Colonic mucosa (tissue), 4 donors: ENCODE measurements at regions of chr9 and their contacts with region 1.

Region 1: GRCh38 chr9:89549031-89549644 is 51.2 kb upstream of the SEMA4D start:
- DNase-seq: peak; percentile 86
- H3K4me3 ChIP-seq: no peak overlapping the region
- H3K27ac ChIP-seq: no peak overlapping the region
- H3K4me1 ChIP-seq: no peaks in the 10 kb centered on the region
- H3K27me3 ChIP-seq: no peaks in the 10 kb centered on the region
- CTCF ChIP-seq: peak; percentile 94

Region 2: DNA sequence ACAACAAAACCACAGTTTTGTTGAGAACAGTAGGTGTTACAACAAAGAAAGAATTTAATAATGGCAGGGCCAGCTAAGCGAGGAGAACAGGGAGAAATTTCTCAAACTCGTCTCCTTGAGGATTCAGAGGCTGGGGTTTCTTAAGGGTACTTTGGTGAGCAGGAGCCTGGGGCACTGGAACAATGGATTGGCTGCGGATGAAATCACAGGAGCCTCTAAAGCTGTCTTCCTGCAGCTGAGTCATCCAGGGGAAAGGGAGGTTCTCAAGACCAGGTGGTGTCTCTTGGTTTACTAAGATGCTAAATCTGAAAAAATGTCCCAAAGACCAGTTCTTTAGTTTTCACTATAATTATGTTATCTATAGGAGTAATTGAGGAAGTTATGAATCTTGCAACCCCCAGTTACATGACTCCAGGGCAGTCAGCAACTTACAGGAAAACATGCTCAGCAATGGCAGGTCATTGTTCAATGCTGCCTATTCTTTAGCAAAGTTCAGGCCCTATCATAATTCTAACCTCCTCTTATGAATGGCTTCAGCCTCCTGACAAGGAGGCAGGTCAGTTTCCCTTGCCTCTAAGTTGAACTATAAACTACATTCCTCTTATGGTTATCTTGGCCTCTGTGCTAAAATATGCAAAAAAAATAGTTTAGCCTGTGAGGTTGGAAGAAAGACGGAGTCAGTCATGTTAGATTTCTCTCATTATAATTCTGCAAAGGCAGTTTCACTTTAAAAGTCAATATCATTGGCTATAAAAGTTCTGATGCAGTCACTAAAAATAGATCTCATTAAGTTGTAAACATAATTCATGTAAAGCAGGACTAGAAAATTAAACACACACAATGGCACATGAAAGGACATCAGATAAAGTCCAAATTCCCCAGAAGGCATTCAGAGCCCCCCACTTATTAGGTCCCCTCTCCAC is 301.4 kb before region 1 on chr9:
- intact Hi-C with region 1: no loop called
- DNase-seq: no peak
- H3K4me3 ChIP-seq: no peak overlapping the region
- H3K27ac ChIP-seq: peak overlapping the region; percentile 80
- H3K4me1 ChIP-seq: no peaks in the 10 kb centered on the region
- H3K27me3 ChIP-seq: no peaks in the 10 kb centered on the region
- CTCF ChIP-seq: no peak

Region 3: DNA sequence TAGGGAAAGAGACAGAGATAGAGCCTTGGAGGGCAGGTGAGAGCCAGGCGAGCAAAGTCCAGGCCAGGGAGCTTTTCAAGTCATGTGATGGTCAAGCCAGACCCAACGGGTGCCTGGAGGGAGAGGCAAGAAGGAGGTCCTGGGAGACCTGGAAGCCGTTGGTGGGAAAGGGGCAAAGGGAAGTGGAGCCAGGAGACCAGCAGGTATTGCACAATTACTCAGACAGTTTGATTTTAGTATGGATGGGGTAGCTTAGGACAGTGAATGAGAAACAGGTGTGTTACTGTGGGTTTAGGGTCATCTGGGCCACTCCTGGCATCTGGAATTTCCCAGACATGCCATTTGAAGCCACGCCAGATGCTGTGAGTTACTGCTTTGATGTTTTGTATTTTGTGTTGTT is 225.7 kb before region 1 on chr9:
- intact Hi-C with region 1: loop called (anchors 5 kb)
- DNase-seq: no peak
- H3K4me3 ChIP-seq: no peak overlapping the region
- H3K27ac ChIP-seq: no peak overlapping the region
- H3K4me1 ChIP-seq: peaks cover 10% of the 10 kb centered on the region
- H3K27me3 ChIP-seq: no peaks in the 10 kb centered on the region
- CTCF ChIP-seq: no peak

Region 4: DNA sequence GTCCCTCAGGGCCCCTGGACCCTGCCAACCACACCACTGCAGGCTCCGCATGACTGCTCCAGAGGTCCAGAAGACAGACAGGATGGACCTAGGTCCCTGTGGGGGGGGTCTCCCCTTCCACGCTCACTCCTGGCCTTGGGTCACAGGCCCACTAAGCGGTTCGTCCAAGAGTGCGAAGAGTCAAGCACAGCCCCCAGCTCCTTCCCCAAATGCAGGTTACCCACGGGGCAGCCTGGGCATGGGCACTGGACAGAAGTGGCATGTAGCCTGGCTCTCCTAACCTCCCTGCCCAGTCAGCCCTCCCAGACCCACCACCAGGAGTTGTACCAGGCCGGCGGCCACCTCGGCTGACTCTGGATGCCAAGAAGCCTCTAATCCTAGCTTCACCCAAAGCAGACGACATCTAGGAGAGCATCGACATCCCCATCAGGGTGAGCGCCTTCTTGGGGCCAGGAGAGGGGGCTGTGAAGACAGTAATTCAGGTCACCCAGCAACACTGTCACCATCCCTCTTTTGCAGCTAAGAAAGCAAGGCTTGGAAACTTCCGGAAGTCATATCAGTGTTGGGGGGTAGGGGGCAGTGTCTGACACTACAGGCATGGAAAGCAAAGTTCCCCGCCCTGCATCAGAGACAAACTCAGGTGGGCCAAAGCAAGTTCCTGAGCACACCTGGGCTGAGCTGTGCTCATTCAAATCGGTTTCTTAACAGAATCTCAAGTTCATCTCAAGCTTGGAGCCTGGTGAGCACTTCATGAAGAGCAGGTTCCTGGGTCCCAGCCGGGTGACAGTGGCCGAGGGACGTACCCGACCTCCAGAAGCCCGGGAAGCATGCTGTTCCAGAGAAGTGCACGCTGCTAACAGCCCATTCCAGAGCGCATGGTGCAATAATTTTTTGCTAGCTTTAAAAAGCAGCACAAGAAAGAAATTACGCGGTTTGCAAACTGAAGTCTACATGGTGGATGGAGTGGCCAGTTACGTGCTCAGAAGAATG is 119.9 kb before region 1 on chr9:
- intact Hi-C with region 1: loop called (anchors 5 kb)
- DNase-seq: no peak
- H3K4me3 ChIP-seq: no peak overlapping the region
- H3K27ac ChIP-seq: no peak overlapping the region
- H3K4me1 ChIP-seq: peaks cover 4% of the 10 kb centered on the region
- H3K27me3 ChIP-seq: no peaks in the 10 kb centered on the region
- CTCF ChIP-seq: no peak

Region 5: DNA sequence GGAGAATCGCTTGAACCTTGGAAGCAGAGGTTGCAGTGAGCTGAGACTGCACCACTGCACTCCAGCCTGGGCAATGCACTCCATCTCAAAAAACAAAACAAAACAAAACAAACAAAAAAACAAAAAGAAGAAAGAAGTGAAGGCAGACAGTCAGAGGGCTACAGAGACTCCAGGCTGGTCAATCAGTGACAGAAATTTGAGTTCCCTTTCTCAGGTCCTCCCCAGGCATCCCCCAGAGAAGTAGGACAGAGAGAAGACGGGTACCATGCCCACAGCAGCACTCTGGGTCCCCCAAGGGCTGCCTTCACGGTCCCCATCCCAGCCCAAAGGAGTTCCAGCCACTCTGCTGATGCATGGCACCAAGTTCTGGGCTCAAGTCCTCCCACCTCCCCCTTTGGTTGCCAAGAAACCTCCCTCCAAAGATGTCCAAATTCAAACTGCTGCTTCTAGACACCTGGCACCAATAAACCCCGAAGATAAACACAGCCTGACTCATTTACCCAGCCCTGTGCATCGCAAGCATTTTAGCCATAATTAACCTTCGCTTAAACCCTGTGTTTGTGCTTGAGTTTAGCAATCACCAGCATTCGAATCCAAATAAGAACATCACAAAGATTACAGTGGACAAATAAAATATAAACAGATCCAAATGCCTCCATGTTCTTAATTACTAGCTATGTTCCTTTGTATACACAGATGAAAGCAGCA is 75.2 kb before region 1 on chr9:
- intact Hi-C with region 1: no loop called
- DNase-seq: no peak
- H3K4me3 ChIP-seq: no peak overlapping the region
- H3K27ac ChIP-seq: peak overlapping the region; percentile 18
- H3K4me1 ChIP-seq: peaks cover 12% of the 10 kb centered on the region
- H3K27me3 ChIP-seq: no peaks in the 10 kb centered on the region
- CTCF ChIP-seq: no peak